Spleen (tissue), 13 donors: ENCODE measurements at regions of chr17 and their contacts with region 1.

Region 1: GRCh38 chr17:1122533-1123392 is 57.0 kb downstream of the ABR start:
- DNase-seq: peak; percentile 93
- H3K4me3 ChIP-seq: peak overlapping the region in 1 of 8 donors; percentile 16
- H3K27ac ChIP-seq: peak overlapping the region in 7 of 8 donors; percentile 56 to 83 (median 75)
- H3K4me1 ChIP-seq: peaks cover 9 to 39% (median 21%) of the 10 kb centered on the region in 6 donors
- H3K27me3 ChIP-seq: no peaks in the 10 kb centered on the region
- CTCF ChIP-seq: peak; percentile 90 to 97 (median 93)
- POLR2A ChIP-seq: no peak

Region 2: DNA sequence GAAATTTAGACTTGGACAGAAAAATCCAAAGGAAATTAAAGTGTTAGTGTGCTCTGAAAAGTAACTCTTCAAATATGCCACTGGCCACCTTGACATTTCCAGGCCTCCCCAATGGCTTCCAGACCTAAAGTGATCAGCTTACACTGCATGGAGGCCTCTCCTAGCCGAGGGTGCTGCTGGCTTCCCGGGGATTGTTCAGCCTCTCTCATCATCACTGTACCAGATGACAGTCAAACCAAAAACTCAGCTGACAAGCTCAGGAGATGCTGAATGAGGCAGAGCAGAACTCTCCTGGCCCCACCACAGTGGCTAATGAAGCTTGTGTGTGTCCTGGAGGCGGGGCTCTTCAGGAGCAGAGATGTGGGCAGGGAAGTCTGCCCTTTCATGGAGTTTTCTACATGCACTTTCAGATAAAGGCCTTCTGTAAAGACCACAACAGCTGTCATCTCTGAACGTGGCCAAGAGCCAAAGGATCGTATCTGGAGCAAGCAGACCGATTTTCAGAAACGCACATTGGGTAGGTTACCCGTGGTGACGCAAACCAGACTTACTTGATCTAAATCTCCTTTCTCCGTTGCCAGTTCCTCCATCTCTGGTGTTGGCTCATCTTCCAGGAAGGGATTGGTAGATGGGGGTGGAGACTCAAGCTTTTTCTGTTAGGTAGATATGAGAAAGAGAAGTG is 521.4 kb before region 1 on chr17:
- intact Hi-C with region 1: no loop called
- DNase-seq: no peak
- H3K4me3 ChIP-seq: peak overlapping the region in 1 of 8 donors; percentile 15
- H3K27ac ChIP-seq: peak overlapping the region in 7 of 8 donors; percentile 16 to 69 (median 63)
- H3K4me1 ChIP-seq: peaks cover 0 to 36% (median 10%) of the 10 kb centered on the region in 6 donors
- H3K27me3 ChIP-seq: no peaks in the 10 kb centered on the region
- CTCF ChIP-seq: no peak
- POLR2A ChIP-seq: no peak

Region 3: GRCh38 chr17:915538-916201 is 207.1 kb before region 1 on chr17:
- intact Hi-C with region 1: no loop called
- DNase-seq: no peak
- H3K4me3 ChIP-seq: peak overlapping the region in 1 of 8 donors; percentile 2
- H3K27ac ChIP-seq: peak overlapping the region; percentile 22 to 80 (median 71)
- H3K4me1 ChIP-seq: peaks cover 0 to 15% (median 2%) of the 10 kb centered on the region in 6 donors
- H3K27me3 ChIP-seq: peaks cover 0 to 12% (median 0%) of the 10 kb centered on the region in 7 donors
- CTCF ChIP-seq: no peak
- POLR2A ChIP-seq: no peak

Region 4: DNA sequence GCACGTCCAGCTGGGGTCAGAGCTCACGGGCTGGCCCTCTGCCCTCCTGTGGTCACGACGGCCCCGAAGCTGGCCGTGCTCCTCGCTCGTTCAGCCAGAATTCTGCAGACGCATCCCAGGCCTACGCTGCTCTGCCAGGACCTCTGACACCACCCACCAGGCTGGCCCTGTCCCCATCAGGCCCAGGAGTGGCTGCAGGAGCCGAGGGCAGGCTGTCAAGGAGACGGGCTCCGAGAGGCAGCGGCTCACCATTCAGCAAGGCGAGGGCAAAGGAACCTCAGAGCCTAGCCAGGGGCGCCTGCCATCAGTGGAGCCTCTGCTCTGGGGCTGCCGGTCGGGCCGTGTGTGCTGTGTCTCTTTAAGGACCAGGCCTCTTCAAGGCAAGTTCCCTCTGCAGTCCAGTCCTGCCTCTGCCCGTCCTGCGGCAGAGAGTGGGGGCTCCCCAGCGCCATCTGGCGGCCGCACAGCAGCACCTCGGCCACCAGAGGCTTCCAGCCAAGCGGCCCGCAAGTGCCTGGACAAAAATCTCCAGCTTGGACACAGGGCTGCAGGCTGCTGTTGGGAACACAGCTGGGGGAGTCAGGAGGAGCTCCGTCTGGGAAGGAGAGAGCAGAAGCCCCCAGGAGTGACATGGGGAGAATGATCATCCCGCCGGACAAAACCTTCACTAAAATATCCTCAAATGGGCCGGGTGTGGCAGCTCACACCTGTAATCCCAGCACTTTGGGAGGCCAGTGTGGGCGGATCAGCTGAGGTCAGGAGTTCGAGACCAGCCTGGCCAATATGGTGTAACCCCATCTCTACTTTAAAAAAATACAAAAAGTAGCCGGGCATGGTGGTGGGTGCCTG is 64.4 kb after region 1 on chr17:
- intact Hi-C with region 1: loop called (anchors 5 kb)
- DNase-seq: peak; percentile 96
- H3K4me3 ChIP-seq: peak overlapping the region in 2 of 8 donors; percentile 19 to 27
- H3K27ac ChIP-seq: peak overlapping the region in 4 of 8 donors; percentile 19 to 59 (median 34)
- H3K4me1 ChIP-seq: peaks cover 30 to 74% (median 52%) of the 10 kb centered on the region in 6 donors
- H3K27me3 ChIP-seq: no peaks in the 10 kb centered on the region
- CTCF ChIP-seq: peak; percentile 87 to 98 (median 97)
- POLR2A ChIP-seq: no peak

Region 5: DNA sequence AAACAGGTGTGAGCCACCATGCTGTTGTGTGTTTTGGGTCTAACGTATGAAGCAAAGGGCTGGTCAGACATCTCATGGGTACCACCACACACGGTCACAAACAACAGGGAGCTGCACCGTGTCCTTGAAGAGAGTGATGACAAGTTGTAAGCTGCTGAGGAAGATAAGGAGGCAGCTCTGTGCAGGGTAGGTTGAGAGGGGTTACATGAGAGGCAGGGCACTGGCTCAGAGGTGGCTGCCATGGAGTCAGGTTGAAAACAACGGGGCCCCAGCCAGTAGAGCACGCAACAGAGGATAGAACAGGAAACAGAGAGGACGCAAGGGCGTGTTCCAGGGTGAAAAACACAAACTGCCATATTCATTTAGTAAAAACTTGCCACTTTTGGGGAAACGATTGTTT is 208.9 kb after region 1 on chr17:
- intact Hi-C with region 1: loop called (anchors 5 kb)
- DNase-seq: no peak
- H3K4me3 ChIP-seq: no peak overlapping the region
- H3K27ac ChIP-seq: no peak overlapping the region
- H3K4me1 ChIP-seq: peaks cover 0 to 18% (median 11%) of the 10 kb centered on the region in 6 donors
- H3K27me3 ChIP-seq: peaks cover 0 to 11% (median 0%) of the 10 kb centered on the region in 7 donors
- CTCF ChIP-seq: no peak
- POLR2A ChIP-seq: no peak